ENCODE measurements at regions of chr2 and their contacts with region 1.

Region 1: GRCh38 chr2:237572021-237572741 is 5.8 kb downstream of the PRLH start:
- DNase-seq: peak; percentile 93 to 97 (median 94)
- H3K4me3 ChIP-seq: no peak overlapping the region
- H3K27ac ChIP-seq: no peak overlapping the region
- H3K4me1 ChIP-seq: peaks cover 2% of the 10 kb centered on the region
- H3K27me3 ChIP-seq: no peaks in the 10 kb centered on the region
- CTCF ChIP-seq: peak; percentile 97 to 100 (median 100)
- EP300 ChIP-seq: no peak
- POLR2A ChIP-seq: peak; percentile 32

Region 2: DNA sequence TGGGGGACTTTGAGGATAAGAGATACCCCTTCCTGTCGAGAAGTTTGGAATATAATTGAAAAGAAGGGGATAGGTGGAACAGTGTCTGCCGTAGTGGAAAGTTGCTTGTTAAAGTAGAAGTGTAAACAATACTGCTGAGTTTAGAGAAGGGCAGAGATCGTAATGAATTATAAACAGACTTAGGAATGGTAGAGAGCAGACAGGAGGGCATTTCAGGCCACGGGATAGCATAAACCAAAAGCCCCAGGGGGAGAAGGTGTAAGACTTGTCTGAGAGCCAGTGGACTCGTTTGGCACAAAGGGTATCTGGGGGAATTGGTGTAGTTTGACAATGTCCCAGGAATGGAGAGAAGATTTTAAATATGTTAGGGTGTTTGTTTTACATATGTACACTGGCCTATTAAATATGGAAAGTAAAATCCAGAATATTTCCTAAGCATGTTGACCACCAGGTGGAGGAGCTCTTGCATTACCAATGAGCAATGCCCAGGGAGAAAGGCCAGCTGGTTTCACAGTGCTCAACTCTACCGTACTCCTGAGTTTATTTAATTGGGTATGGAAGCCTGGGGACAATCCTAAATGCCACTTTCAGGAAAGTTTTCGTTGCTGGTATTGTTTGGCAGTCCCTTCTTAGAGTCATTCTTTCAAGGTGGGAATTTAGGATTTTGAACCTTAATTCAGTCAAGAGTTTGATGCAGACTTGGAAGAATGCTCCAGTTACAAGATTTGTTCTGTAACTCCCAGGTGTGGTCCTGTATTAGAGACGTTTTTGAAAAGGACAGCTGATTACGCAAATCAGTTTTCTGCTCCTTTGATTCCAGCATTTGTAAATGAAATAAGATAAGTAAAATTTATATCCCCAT is 479.0 kb before region 1 on chr2:
- intact Hi-C with region 1: loop called in 1 of 4 experiments (anchors 10 kb)
- DNase-seq: peak in 4 of 5 donors; percentile 49 to 65 (median 58)
- H3K4me3 ChIP-seq: no peak overlapping the region
- H3K27ac ChIP-seq: no peak overlapping the region
- H3K4me1 ChIP-seq: peaks cover 6% of the 10 kb centered on the region
- H3K27me3 ChIP-seq: no peaks in the 10 kb centered on the region
- CTCF ChIP-seq: peak; percentile 47 to 83 (median 55)
- EP300 ChIP-seq: no peak
- POLR2A ChIP-seq: no peak

Region 3: GRCh38 chr2:237122214-237122666 is 449.9 kb before region 1 on chr2:
- intact Hi-C with region 1: loop called in 1 of 4 experiments (anchors 10 kb)
- DNase-seq: peak; percentile 51 to 68 (median 61)
- H3K4me3 ChIP-seq: no peak overlapping the region
- H3K27ac ChIP-seq: no peak overlapping the region
- H3K4me1 ChIP-seq: no peaks in the 10 kb centered on the region
- H3K27me3 ChIP-seq: no peaks in the 10 kb centered on the region
- CTCF ChIP-seq: peak in 2 of 3 donors; percentile 49 to 50
- EP300 ChIP-seq: no peak
- POLR2A ChIP-seq: no peak

Region 4: GRCh38 chr2:237154082-237154638 is 418.0 kb before region 1 on chr2:
- intact Hi-C with region 1: loop called in 1 of 4 experiments (anchors 10 kb)
- DNase-seq: peak in 4 of 5 donors; percentile 42 to 63 (median 54)
- H3K4me3 ChIP-seq: no peak overlapping the region
- H3K27ac ChIP-seq: no peak overlapping the region
- H3K4me1 ChIP-seq: peaks cover 5% of the 10 kb centered on the region
- H3K27me3 ChIP-seq: no peaks in the 10 kb centered on the region
- CTCF ChIP-seq: peak; percentile 27 to 78 (median 65)
- EP300 ChIP-seq: no peak
- POLR2A ChIP-seq: no peak

Region 5: GRCh38 chr2:237432484-237433092 is 139.6 kb before region 1 on chr2:
- intact Hi-C with region 1: no loop called
- DNase-seq: no peak
- H3K4me3 ChIP-seq: no peak overlapping the region
- H3K27ac ChIP-seq: no peak overlapping the region
- H3K4me1 ChIP-seq: peaks cover 13% of the 10 kb centered on the region
- H3K27me3 ChIP-seq: no peaks in the 10 kb centered on the region
- CTCF ChIP-seq: no peak
- EP300 ChIP-seq: no peak
- POLR2A ChIP-seq: no peak

Region 6: GRCh38 chr2:237512774-237513466 is 59.3 kb before region 1 on chr2:
- intact Hi-C with region 1: loop called (anchors 1 to 5 kb)
- DNase-seq: peak; percentile 90 to 94 (median 91)
- H3K4me3 ChIP-seq: no peak overlapping the region
- H3K27ac ChIP-seq: peak overlapping the region in 1 of 2 donors; percentile 86
- H3K4me1 ChIP-seq: peaks cover 25% of the 10 kb centered on the region
- H3K27me3 ChIP-seq: no peaks in the 10 kb centered on the region
- CTCF ChIP-seq: peak; percentile 71 to 95 (median 91)
- EP300 ChIP-seq: no peak
- POLR2A ChIP-seq: no peak

Measured in ovary (tissue), 10 donors.